Activated T-helper 1 cell treated with anti-CD3 and anti-CD28 coated beads, Interleukin-12 subunit alpha, Interleukin-12 subunit beta, Interleukin-2, Interleukin-4 antibody, amounts not matched to agents 30 ng/mL and 10 ng/mL and 1 ng/mL, durations not matched to agents 14 hours and 24 hours and 36 hours (primary cell): ENCODE measurements at regions of chr19 and their contacts with region 1.

Region 1: DNA sequence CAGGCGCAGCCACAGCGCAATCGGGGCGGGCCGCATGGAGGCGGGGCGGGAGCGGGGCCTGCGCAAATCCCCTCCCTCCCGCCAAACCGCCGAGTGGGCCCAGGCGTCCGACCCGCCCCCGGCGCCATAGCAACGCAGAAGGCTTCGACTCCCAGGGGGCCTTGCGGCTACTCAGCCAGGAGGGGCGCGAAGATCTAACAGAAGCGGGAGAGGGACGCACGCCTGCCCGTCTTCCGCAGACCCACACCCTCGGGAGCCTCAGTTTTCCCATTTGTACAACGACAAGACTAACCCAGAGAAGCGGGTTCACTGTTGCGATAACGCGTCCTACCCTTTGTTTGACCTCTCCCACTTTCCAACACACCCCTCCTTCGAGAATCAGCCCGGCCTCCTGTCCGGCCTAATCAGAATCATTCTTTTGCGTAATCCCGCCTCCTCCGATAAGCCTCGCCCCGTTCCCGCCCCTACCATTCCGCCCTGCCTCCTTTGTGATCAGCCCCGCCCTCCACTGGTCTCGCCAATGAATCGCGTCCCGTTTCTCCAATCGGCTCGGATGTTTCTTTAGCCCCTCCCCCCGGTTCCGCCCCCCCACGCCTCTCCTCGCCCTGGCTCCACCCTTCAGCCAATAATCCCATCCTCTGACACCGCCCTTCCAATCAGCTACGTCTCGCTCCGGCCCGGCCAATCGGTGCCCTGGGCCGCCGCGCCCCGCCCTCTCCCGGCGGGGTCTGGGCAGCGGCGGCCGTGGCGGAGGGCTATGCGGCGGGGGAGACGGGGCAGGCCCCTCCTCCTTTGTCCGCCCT is at the start of gene PCSK4:
- DNase-seq: peak; percentile 93
- H3K4me3 Mint-ChIP-seq: peak within 1 kb of the TSS; percentile 82
- H3K27ac Mint-ChIP-seq: peak within 1 kb of the TSS; percentile 74
- H3K4me1 Mint-ChIP-seq: peaks cover 11% of the 10 kb centered on the region
- H3K27me3 Mint-ChIP-seq: peaks cover 6% of the 10 kb centered on the region
- total RNA-seq, gene PCSK4: 0.26 and 1.5 TPM in 2 replicates

Region 2: GRCh38 chr19:1406774-1407499 is 83.6 kb before region 1 on chr19:
- intact Hi-C with region 1: loop called (anchors 2 kb)
- DNase-seq: peak; percentile 100
- H3K4me3 Mint-ChIP-seq: peak overlapping the region; percentile 76
- H3K27ac Mint-ChIP-seq: peak overlapping the region; percentile 83
- H3K4me1 Mint-ChIP-seq: peaks cover 33% of the 10 kb centered on the region
- H3K27me3 Mint-ChIP-seq: peaks cover 7% of the 10 kb centered on the region

Region 3: DNA sequence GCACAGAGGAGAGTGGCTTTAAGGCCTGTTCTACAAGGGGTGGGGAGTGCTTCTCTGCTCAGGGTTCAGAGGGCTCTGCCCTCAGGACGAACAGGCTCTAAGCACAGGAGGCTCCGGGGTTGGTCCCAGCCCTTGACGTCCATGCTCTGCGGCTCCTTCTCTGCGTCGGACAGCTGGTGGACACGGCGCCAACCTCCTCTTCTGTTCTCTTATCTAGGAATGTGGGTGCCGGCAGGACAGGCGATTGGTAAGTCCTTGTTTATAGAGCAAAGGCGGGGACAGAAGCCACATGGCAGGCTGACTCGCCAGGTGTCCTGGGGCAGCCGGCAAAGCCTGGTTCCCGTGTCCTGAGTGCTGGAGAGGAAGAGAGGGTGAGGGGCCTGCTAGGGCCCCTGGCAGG is 60.8 kb before region 1 on chr19:
- intact Hi-C with region 1: no loop called
- DNase-seq: no peak
- H3K4me3 Mint-ChIP-seq: no peak overlapping the region
- H3K27ac Mint-ChIP-seq: no peak overlapping the region
- H3K4me1 Mint-ChIP-seq: no peaks in the 10 kb centered on the region
- H3K27me3 Mint-ChIP-seq: no peaks in the 10 kb centered on the region

Region 4: DNA sequence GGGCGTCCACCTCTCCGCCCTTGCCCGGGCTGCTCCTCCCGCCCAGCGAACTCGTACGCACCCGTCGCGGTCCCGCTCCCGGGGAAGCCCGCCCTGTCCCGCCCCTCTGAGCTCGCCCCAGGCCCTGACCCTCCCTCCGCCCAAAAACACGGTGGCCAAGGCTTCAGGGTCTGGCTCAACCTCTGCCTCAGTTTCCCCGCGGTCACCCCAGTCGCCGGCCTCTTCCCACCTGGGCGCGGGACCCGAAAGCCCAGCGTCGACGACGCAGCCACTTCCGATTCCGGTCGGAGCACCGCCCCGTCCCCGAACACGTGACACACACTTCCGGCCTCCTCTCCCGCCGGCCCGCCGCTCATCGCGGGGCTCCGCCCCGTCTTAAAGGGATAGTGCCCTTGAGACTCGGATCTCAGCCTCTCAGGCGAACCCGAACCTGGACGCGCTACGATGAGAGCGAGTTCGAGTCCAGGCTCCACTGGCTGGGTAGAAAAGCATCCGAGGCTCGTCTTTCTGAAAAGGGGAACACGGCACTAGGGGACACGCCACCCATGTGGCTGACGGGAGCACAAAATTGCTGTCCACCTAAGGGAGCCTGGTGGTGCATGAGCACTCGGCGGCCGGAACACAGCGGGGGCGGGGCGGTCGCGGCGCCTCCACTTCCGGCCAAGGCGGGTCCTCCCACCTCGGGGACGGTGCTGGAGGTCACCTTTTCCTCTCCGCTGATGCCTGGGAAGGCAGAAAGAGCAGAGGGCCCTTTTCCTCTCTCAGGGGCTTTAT is 11.4 kb before region 1 on chr19 and contains the start of gene C19orf25:
- intact Hi-C with region 1: loop called (anchors 1 kb)
- DNase-seq: peak; percentile 92
- H3K4me3 Mint-ChIP-seq: peak within 1 kb of the TSS; percentile 96
- H3K27ac Mint-ChIP-seq: peak within 1 kb of the TSS; percentile 97
- H3K4me1 Mint-ChIP-seq: peaks cover 12% of the 10 kb centered on the region
- H3K27me3 Mint-ChIP-seq: no peaks in the 10 kb centered on the region
- total RNA-seq, gene C19orf25: 37.1 and 38.5 TPM in 2 replicates

Region 5: GRCh38 chr19:1513499-1514294 is 23.2 kb after region 1 on chr19:
- intact Hi-C with region 1: loop called (anchors 1 kb)
- DNase-seq: peak; percentile 57
- H3K4me3 Mint-ChIP-seq: no peak overlapping the region
- H3K27ac Mint-ChIP-seq: no peak overlapping the region
- H3K4me1 Mint-ChIP-seq: no peaks in the 10 kb centered on the region
- H3K27me3 Mint-ChIP-seq: peaks cover 12% of the 10 kb centered on the region

Region 6: DNA sequence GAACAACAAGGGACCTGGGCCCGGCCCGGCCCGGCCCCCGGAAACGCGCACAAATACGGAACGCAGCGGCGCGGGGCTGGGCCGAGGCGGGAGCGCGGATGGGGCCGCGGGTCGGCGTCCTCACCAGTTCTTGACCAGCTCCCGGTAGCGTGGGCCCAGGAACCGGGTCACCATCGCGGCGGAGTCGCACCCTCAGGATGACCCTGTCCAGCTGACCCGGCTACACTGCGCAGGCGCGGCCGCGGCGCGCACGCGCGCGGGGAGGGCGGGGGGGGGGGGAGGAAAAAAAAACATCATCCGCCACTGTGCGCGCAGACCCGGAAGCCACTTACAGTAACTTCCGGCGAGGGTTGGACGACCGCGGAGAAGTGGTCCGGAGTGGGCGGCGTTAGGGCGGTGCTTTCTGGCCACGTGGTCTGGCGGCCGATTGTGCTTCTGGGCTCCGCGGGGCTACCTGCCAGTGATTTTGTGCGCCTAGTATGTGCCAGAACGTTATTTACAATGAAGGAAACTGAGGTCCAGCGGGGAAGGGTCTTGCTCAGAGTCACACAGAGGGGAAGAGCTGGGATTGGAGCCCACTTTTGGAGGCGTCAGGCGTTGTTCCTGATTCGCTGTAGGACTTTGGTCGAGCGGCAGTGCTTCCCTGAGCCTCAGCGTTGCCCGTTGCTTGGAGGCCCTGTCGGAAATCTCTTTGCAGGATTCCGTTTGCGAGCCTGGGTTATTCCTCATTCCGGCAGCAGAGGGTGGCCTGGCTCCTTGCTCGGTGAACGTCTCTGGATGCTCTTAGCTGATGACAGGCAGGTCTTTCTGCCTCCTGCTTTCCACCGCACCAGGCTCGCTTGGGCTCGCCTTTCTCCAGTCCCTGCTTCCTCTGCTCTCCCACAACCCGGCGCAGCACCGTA is 115.0 kb after region 1 on chr19 and contains the start of gene UQCR11:
- intact Hi-C with region 1: loop called (anchors 1 kb)
- DNase-seq: peak; percentile 88
- H3K4me3 Mint-ChIP-seq: peak within 1 kb of the TSS; percentile 98
- H3K27ac Mint-ChIP-seq: peak within 1 kb of the TSS; percentile 100
- H3K4me1 Mint-ChIP-seq: peaks cover 27% of the 10 kb centered on the region
- H3K27me3 Mint-ChIP-seq: no peaks in the 10 kb centered on the region
- total RNA-seq, gene UQCR11: 171 and 176 TPM in 2 replicates

Region 7: GRCh38 chr19:1812469-1813196 is 322.1 kb after region 1 on chr19:
- intact Hi-C with region 1: loop called (anchors 1 kb)
- DNase-seq: peak; percentile 92
- H3K4me3 Mint-ChIP-seq: peak overlapping the region; percentile 93
- H3K27ac Mint-ChIP-seq: peak overlapping the region; percentile 97
- H3K4me1 Mint-ChIP-seq: peaks cover 18% of the 10 kb centered on the region
- H3K27me3 Mint-ChIP-seq: no peaks in the 10 kb centered on the region

Region 8: GRCh38 chr19:2096480-2097329 is 606.2 kb after region 1 on chr19 and contains the start of gene IZUMO4:
- intact Hi-C with region 1: loop called (anchors 1 kb)
- DNase-seq: peak; percentile 99
- H3K4me3 Mint-ChIP-seq: peak within 1 kb of the TSS; percentile 97
- H3K27ac Mint-ChIP-seq: peak within 1 kb of the TSS; percentile 91
- H3K4me1 Mint-ChIP-seq: peaks cover 23% of the 10 kb centered on the region
- H3K27me3 Mint-ChIP-seq: no peaks in the 10 kb centered on the region
- total RNA-seq, gene IZUMO4: 6.7 and 7.1 TPM in 2 replicates